PC-9 (cell line): ENCODE measurements at regions of chr4 and their contacts with region 1.

Region 1: GRCh38 chr4:103019308-103020124 is at the start of gene SLC9B1:
- DNase-seq: peak; percentile 85 to 92
- H3K4me3 ChIP-seq: peak within 1 kb of the TSS; percentile 73
- H3K27ac ChIP-seq: peak within 1 kb of the TSS; percentile 86
- H3K4me1 ChIP-seq: peaks cover 10% of the 10 kb centered on the region; the same call in 1 of the 2 replicates
- H3K27me3 ChIP-seq: no peaks in the 10 kb centered on the region
- CTCF ChIP-seq: no peak
- total RNA-seq, gene SLC9B1: 0.60 TPM in 1 of 2 replicates, not detected in the other

Region 2: GRCh38 chr4:101953949-101954348 is 1065.6 kb before region 1 on chr4:
- CTCF ChIA-PET with region 1: no interaction called
- POLR2A ChIA-PET with region 1: no interaction called
- intact Hi-C with region 1: no loop called
- DNase-seq: peak in 1 of 2 experiments; percentile 41
- H3K4me3 ChIP-seq: no peak overlapping the region
- H3K27ac ChIP-seq: no peak overlapping the region
- H3K4me1 ChIP-seq: no peaks in the 10 kb centered on the region
- H3K27me3 ChIP-seq: no peaks in the 10 kb centered on the region
- CTCF ChIP-seq: no peak

Region 3: GRCh38 chr4:102344954-102345794 is 674.3 kb before region 1 on chr4 and contains the start of gene SLC39A8:
- CTCF ChIA-PET with region 1: no interaction called
- POLR2A ChIA-PET with region 1: no interaction called
- intact Hi-C with region 1: loop called (anchors 10 kb)
- DNase-seq: peak; percentile 72 to 82
- H3K4me3 ChIP-seq: peak within 1 kb of the TSS; percentile 72
- H3K27ac ChIP-seq: no peak within 1 kb of the TSS
- H3K4me1 ChIP-seq: peaks cover 15% of the 10 kb centered on the region; the same call in 1 of the 2 replicates
- H3K27me3 ChIP-seq: no peaks in the 10 kb centered on the region
- CTCF ChIP-seq: peak; percentile 72
- total RNA-seq, gene SLC39A8: 11.6 and 14.5 TPM in 2 replicates

Region 4: GRCh38 chr4:102500696-102501446 is 518.6 kb before region 1 on chr4 and contains the start of gene NFKB1:
- CTCF ChIA-PET with region 1: no interaction called
- POLR2A ChIA-PET with region 1: no interaction called
- intact Hi-C with region 1: loop called (anchors 2 kb)
- DNase-seq: peak in 1 of 2 experiments; percentile 35
- H3K4me3 ChIP-seq: peak within 1 kb of the TSS; percentile 80
- H3K27ac ChIP-seq: peak within 1 kb of the TSS; percentile 82
- H3K4me1 ChIP-seq: peaks cover 34% of the 10 kb centered on the region
- H3K27me3 ChIP-seq: no peaks in the 10 kb centered on the region
- CTCF ChIP-seq: no peak
- total RNA-seq, gene NFKB1: 11.6 and 16.8 TPM in 2 replicates

Region 5: GRCh38 chr4:102760645-102761295 is 258.7 kb before region 1 on chr4 and contains the start of gene MANBA:
- CTCF ChIA-PET with region 1: no interaction called
- POLR2A ChIA-PET with region 1: no interaction called
- intact Hi-C with region 1: no loop called
- DNase-seq: peak; percentile 60 to 63
- H3K4me3 ChIP-seq: peak within 1 kb of the TSS; percentile 89
- H3K27ac ChIP-seq: no peak within 1 kb of the TSS
- H3K4me1 ChIP-seq: peaks cover 17% of the 10 kb centered on the region
- H3K27me3 ChIP-seq: no peaks in the 10 kb centered on the region
- CTCF ChIP-seq: no peak
- total RNA-seq, gene MANBA: 9.8 and 11.8 TPM in 2 replicates

Region 6: GRCh38 chr4:102826890-102827673 is 192.4 kb before region 1 on chr4 and contains the start of gene UBE2D3:
- CTCF ChIA-PET with region 1: interaction called, 3 read pairs
- POLR2A ChIA-PET with region 1: interaction called, 3 read pairs
- intact Hi-C with region 1: loop called (anchors 5 kb)
- DNase-seq: peak; percentile 75 to 85
- H3K4me3 ChIP-seq: peak within 1 kb of the TSS; percentile 95
- H3K27ac ChIP-seq: peak within 1 kb of the TSS; percentile 99
- H3K4me1 ChIP-seq: peaks cover 38% of the 10 kb centered on the region
- H3K27me3 ChIP-seq: no peaks in the 10 kb centered on the region
- CTCF ChIP-seq: no peak
- total RNA-seq, gene UBE2D3: 154 and 183 TPM in 2 replicates